ENCODE measurements at regions of chr6 and their contacts with region 1.

Region 1: DNA sequence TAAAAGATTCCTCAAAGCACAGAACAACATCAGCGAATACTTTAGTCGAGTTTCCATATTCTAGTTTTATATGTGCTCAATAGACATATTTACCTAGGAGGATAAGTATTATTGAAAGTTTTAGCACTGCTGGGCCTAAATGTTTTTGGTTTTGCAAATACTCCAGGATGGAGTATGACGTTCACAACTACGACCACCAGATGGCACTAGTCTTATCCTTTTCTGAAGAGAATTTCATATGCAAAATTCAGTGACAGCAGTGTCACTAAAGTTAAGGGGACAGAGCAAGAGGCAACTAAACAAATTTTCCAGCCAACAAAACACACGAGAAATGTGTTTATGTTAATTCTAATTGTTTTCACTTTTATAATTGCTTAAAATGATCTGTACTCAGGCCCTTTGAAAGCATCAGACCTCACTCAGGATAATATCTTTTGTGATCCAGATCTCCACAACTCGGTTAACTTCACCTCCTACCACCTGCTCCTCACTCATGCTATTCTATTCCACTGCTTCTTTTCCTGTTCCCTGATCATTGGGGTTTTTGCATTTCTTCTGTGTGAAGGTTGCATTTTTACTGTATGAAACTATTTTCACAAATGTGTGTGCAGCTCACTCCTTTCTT is 220.8 kb downstream of the TRDN start:
- DNase-seq: peak; percentile 65
- H3K4me3 Mint-ChIP-seq: no peak overlapping the region
- H3K27ac Mint-ChIP-seq: no peak overlapping the region
- H3K4me1 Mint-ChIP-seq: no peaks in the 10 kb centered on the region
- H3K27me3 Mint-ChIP-seq: peaks cover 2% of the 10 kb centered on the region

Region 2: DNA sequence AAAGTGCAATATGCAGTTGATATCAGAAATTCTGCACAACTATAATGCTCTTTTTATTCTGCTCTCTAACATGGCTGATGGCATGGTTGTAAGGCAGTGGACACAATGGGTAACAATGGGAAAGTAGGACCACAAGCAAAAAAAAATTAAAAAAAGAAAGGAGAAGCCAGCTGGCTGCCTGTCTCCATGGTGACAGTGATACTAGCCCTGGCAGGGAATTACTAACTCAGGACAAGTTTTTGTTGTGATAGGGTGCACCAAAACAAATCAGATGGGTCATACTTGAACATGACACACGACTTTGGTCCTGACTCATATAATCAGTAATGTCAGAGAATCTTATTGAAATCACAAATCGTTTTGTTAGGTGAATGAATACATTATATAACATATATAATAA is 51.4 kb after region 1 on chr6:
- CTCF ChIA-PET with region 1: no interaction called
- intact Hi-C with region 1: no loop called
- DNase-seq: no peak
- H3K4me3 Mint-ChIP-seq: no peak overlapping the region
- H3K27ac Mint-ChIP-seq: no peak overlapping the region
- H3K4me1 Mint-ChIP-seq: no peaks in the 10 kb centered on the region
- H3K27me3 Mint-ChIP-seq: no peaks in the 10 kb centered on the region

Region 3: DNA sequence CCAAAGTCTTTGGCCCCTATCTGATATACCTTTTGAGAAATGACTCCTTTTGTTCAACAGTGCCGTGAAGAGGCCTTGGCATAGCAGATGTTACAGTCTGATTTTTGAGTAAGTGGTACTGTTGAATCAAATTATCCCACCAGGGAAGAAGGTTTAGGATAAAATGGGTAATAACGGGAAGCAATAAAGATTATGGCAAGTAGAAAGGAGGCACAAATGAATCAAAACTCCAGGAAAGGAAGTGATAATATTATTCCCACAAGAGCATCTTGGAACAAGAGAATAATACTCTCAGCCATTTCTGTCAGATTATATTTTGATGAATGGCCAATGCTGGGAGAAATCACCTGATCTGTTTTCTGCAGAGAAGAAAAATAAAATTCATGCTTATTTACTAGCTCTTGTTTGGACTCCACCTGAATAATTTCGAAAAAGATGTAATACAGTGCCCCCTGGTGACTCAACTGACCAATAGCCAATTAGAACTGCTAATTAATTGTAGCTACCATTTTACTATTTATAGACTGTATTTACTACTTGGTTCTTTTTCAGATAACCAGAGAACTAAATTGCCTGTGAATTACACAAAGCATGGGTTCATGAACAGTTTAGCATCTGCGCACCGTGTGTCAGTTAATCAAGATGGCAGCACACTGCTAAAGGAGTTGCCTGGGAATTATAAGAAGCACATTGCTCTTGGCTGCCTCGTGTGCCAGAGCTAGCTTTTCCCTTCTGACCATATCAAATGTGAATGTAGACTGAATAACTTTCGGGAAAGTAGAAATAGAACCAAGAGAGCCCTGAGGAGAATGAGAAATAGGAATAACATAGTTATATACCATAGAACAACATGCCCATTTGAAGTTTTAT is 299.3 kb after region 1 on chr6:
- CTCF ChIA-PET with region 1: interaction called, 7 read pairs
- intact Hi-C with region 1: loop called (anchors 1 kb)
- DNase-seq: no peak
- H3K4me3 Mint-ChIP-seq: no peak overlapping the region
- H3K27ac Mint-ChIP-seq: no peak overlapping the region
- H3K4me1 Mint-ChIP-seq: no peaks in the 10 kb centered on the region
- H3K27me3 Mint-ChIP-seq: no peaks in the 10 kb centered on the region

Region 4: DNA sequence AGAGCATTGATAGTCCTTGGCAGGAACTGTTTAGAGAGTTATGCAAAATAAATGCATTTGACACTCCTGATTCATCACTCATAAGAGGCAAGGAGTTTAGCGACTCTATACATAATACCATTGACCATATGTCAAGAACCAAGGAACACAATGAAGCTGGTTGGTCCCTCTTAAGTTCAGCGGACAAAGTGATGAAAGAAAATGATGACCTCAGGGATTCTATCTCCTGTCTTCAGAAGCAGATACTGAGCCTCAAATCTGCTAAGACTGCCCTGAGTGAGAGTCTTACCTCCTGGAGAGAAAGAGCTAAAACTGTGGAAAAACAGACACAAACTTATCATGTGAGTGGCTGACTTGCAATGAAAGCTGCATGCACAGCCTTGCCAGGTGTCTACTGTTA is 378.2 kb after region 1 on chr6:
- CTCF ChIA-PET with region 1: no interaction called
- intact Hi-C with region 1: loop called (anchors 10 kb)
- DNase-seq: no peak
- H3K4me3 Mint-ChIP-seq: no peak overlapping the region
- H3K27ac Mint-ChIP-seq: no peak overlapping the region
- H3K4me1 Mint-ChIP-seq: no peaks in the 10 kb centered on the region
- H3K27me3 Mint-ChIP-seq: peaks cover 5% of the 10 kb centered on the region

Region 5: DNA sequence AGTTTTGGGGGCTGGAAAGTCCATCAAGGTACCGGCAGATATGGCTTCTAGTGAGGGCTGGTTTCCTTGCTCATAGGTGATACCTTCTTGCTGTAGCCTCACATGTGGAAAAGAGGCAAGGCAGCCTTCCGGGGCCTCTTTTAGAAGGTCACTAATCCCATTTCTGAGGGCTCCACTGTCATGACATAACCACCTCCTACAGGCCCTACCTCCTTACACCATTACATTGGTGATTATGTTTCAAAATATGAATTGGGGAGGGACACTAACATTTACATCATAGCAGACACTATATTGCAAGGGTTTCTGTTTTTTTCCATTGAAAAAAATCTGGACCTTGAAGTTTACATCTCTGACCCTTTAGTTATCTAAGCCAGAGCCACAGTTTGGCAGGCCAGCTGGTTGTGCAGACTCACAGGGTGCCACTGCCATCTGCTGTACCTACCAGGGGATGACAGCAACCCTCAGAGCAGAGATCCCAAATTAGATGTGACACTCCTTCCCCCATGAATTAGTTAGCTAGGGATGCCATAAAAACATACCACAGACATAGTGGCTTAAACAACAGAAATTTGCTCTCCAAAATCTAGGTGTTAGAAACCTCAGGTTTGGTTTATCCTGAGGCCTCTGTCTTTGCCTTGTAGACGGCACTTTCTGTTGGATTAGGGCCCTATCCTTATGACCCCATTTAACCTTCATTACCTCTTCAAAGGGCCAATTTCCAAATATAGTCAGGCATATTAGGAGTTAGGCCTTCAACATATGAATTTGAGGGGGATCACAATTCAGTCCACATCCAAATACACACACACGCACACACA is 1379.9 kb after region 1 on chr6:
- CTCF ChIA-PET with region 1: no interaction called
- intact Hi-C with region 1: loop called (anchors 5 kb)
- DNase-seq: peak; percentile 5
- H3K4me3 Mint-ChIP-seq: no peak overlapping the region
- H3K27ac Mint-ChIP-seq: no peak overlapping the region
- H3K4me1 Mint-ChIP-seq: no peaks in the 10 kb centered on the region
- H3K27me3 Mint-ChIP-seq: peaks cover 4% of the 10 kb centered on the region

Region 6: GRCh38 chr6:124854338-124854922 is 1438.5 kb after region 1 on chr6:
- CTCF ChIA-PET with region 1: no interaction called
- intact Hi-C with region 1: loop called (anchors 5 kb)
- DNase-seq: no peak
- H3K4me3 Mint-ChIP-seq: no peak overlapping the region
- H3K27ac Mint-ChIP-seq: no peak overlapping the region
- H3K4me1 Mint-ChIP-seq: no peaks in the 10 kb centered on the region
- H3K27me3 Mint-ChIP-seq: peaks cover 3% of the 10 kb centered on the region